Activated naive CD4-positive, alpha-beta T cell treated with anti-CD3 and anti-CD28 coated beads, Interleukin-2, amount 10 ng/mL, durations not matched to agents 7 days and 5 days (primary cell): ENCODE measurements at regions of chr16 and their contacts with region 1.

Region 1: GRCh38 chr16:27690608-27691007 is 140.7 kb downstream of the KATNIP start:
- DNase-seq: peak; percentile 48
- H3K4me3 Mint-ChIP-seq: no peak overlapping the region
- H3K27ac Mint-ChIP-seq: no peak overlapping the region
- H3K4me1 Mint-ChIP-seq: no peaks in the 10 kb centered on the region
- H3K27me3 Mint-ChIP-seq: no peaks in the 10 kb centered on the region

Region 2: DNA sequence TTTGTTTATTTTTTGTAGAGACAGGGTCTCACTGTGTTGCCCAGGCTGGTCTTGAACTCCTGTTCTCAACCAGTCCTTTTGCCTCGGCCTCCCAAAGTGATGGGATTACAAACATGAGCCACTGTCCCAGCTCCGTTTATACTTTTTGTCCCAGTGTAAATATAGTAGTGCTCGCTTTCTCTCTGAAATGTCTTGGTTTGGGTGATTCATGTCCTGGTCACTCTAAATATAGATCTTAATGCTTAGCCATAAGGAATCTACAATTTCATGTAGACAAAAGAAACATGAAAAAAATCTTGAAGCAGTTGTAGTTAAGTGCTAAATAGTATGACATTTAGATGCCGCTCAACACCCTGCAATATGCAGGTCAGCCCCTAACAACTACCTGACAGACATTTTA is 13.8 kb before region 1 on chr16:
- CTCF ChIA-PET with region 1: interaction called, 12 read pairs
- DNase-seq: no peak
- H3K4me3 Mint-ChIP-seq: no peak overlapping the region
- H3K27ac Mint-ChIP-seq: no peak overlapping the region
- H3K4me1 Mint-ChIP-seq: no peaks in the 10 kb centered on the region
- H3K27me3 Mint-ChIP-seq: no peaks in the 10 kb centered on the region